IMR-90 (cell line): ENCODE measurements at regions of chr4 and their contacts with region 1.

Region 1: DNA sequence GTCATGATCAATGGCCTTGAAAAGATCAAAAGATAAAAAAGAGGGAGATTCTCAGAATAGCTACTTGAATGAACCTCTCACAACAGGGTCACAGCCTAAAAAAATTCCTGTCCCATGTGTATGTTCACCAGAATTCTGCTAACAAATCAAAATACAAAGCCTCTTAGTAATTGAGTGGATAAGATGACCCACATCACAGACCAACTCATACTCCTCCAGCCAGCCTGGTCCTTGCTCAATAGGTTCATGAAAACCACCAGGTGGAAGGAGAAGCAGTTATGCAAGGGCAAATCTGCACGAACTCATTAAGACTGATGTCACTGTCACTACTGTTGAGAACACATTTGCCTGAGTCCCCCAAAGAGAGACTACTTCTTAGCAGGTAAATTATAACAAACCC is 21.5 kb downstream of the WDFY3 start:
- DNase-seq: peak; percentile 31
- ATAC-seq: no peak
- H3K4me3 ChIP-seq: no peak overlapping the region
- H3K27ac ChIP-seq: no peak overlapping the region
- H3K4me1 ChIP-seq: peaks cover 4% of the 10 kb centered on the region
- H3K27me3 ChIP-seq: no peaks in the 10 kb centered on the region
- CTCF ChIP-seq: no peak
- POLR2A ChIP-seq: no peak
- RAD21 ChIP-seq: no peak

Region 2: GRCh38 chr4:84804136-84804535 is 140.8 kb before region 1 on chr4:
- CTCF ChIA-PET with region 1: no interaction called
- POLR2A ChIA-PET with region 1: no interaction called
- dilution Hi-C with region 1: no loop called
- in situ Hi-C with region 1: no loop called
- intact Hi-C with region 1: loop called (anchors 5 kb)
- DNase-seq: peak; percentile 61
- ATAC-seq: peak; percentile 74
- H3K4me3 ChIP-seq: no peak overlapping the region
- H3K27ac ChIP-seq: no peak overlapping the region
- H3K4me1 ChIP-seq: no peaks in the 10 kb centered on the region; the same call in 1 of the 2 replicates
- H3K27me3 ChIP-seq: no peaks in the 10 kb centered on the region
- CTCF ChIP-seq: no peak
- POLR2A ChIP-seq: no peak
- RAD21 ChIP-seq: no peak

Region 3: DNA sequence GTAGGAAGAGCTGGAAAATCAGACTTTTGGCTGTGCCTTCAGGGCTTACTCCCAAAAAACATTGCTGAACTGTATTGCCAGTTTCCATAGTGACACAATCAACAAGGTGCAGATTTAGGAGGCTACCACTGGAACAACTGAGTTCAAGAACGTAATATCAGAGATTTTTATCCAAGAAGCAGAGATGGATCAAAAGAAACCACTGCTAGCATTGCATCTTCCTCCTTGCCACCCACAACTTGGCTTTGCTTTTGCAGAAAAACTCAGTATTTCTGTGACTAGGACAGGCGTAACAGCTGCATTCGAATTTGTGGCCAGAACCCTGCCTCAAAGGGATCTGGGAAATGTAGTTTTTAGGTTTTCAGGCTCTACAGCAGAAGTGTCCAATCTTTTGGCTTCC is 49.3 kb after region 1 on chr4:
- CTCF ChIA-PET with region 1: no interaction called
- POLR2A ChIA-PET with region 1: no interaction called
- dilution Hi-C with region 1: no loop called
- in situ Hi-C with region 1: no loop called
- intact Hi-C with region 1: no loop called
- DNase-seq: no peak
- ATAC-seq: no peak
- H3K4me3 ChIP-seq: no peak overlapping the region
- H3K27ac ChIP-seq: no peak overlapping the region
- H3K4me1 ChIP-seq: peaks cover 4% of the 10 kb centered on the region; the same call in 1 of the 2 replicates
- H3K27me3 ChIP-seq: no peaks in the 10 kb centered on the region
- CTCF ChIP-seq: no peak
- POLR2A ChIP-seq: no peak
- RAD21 ChIP-seq: no peak